Naive thymus-derived CD8-positive, alpha-beta T cell (primary cell): ENCODE measurements at regions of chr11 and their contacts with region 1.

Region 1: GRCh38 chr11:73661035-73661628 is 14.8 kb downstream of the PLEKHB1 start:
- DNase-seq: peak; percentile 66 to 89 (median 82)
- ATAC-seq: peak; percentile 95 to 97
- H3K4me3 Mint-ChIP-seq: peak overlapping the region in 3 of 10 donors; percentile 11 to 57 (median 43)
- H3K27ac Mint-ChIP-seq: peak overlapping the region in 6 of 10 donors; percentile 45 to 58 (median 50)
- H3K4me1 Mint-ChIP-seq: peaks cover 10 to 27% (median 23%) of the 10 kb centered on the region in 4 donors
- H3K27me3 Mint-ChIP-seq: peaks cover 0 to 2% (median 0%) of the 10 kb centered on the region in 5 donors

Region 2: DNA sequence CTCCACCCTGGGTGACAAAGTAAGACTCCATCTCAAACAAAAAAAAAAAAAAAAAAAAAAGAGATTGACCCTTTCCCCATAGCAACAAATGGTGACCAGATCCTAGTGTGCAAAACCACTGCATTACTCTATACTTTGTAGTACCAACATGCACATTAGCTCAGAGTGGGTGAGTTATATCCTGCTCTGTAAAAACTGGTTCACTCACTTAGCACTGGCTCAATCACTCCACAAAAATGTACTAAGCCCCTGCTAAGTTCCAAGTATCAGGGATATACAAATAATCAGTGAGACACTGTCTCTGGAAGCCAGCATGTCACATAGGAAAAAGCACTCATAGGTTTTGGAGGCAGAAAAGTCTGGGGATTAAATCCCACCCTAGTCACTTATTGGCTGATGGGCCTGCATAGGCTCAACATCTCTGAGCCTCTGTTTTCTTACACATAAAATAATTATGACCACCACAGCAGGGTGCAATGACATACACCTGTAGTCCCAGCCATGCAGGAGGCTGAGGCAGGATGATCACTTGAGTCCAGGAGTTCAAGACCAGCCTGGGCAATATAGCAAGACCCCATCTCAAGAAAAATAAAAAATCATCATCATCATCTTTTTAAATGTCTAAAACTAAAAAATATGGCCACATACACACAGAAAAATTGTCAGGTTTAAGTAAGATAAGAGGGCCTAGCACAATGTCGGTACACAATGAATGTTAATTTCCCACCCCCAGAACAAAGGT is 75.1 kb before region 1 on chr11:
- POLR2A ChIA-PET with region 1: no interaction called
- DNase-seq: no peak
- ATAC-seq: no peak
- H3K4me3 Mint-ChIP-seq: no peak overlapping the region
- H3K27ac Mint-ChIP-seq: no peak overlapping the region
- H3K4me1 Mint-ChIP-seq: peaks cover 0 to 22% (median 7%) of the 10 kb centered on the region in 4 donors
- H3K27me3 Mint-ChIP-seq: no peaks in the 10 kb centered on the region

Region 3: GRCh38 chr11:73625696-73626318 is 35.3 kb before region 1 on chr11:
- POLR2A ChIA-PET with region 1: interaction called, 22 read pairs
- DNase-seq: peak; percentile 46 to 83 (median 70)
- ATAC-seq: peak; percentile 83 to 92
- H3K4me3 Mint-ChIP-seq: no peak overlapping the region
- H3K27ac Mint-ChIP-seq: peak overlapping the region in 2 of 10 donors; percentile 41 to 73
- H3K4me1 Mint-ChIP-seq: peaks cover 2 to 8% (median 4%) of the 10 kb centered on the region in 4 donors
- H3K27me3 Mint-ChIP-seq: peaks cover 7 to 25% (median 18%) of the 10 kb centered on the region in 5 donors